CD4-positive, alpha-beta memory T cell (primary cell): ENCODE measurements at regions of chr2 and their contacts with region 1.

Region 1: DNA sequence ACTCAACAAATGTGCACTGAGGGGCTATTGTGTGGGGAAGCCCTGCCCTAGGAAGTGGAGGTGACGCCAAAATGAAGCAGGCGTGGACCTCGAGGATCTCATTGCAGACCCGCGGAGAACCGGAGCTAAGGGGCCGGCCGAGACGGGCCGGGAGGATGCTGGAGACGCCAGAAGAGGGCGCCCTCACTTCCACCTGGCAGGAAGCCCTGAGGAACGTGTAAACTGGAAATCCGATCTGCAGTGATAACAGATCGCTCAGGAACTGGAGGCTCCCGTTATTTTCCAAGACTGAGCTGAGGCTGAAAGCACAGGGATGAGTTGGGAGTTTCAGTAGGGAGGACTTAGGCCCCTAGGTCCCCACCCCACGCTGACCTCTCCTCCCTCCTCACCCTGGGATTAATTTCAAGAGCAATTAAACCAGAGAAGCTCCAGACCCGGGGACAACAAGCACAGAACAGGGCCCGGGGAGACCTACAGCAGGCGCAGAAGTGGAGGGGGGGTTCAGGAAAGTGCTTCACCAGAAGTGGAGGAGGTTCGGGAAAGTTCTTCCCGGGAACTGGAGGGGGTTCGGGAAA is 7.7 kb upstream of the COL6A3 start:
- DNase-seq: peak; percentile 57 to 75 (median 70)
- H3K4me3 ChIP-seq: peak overlapping the region in 1 of 2 donors; percentile 36
- H3K4me3 Mint-ChIP-seq: peak overlapping the region in 7 of 8 donors; percentile 26 to 78 (median 64)
- H3K27ac ChIP-seq: no peak overlapping the region
- H3K27ac Mint-ChIP-seq: peak overlapping the region in 5 of 7 donors; percentile 50 to 79 (median 61)
- H3K4me1 ChIP-seq: peaks cover 12% of the 10 kb centered on the region
- H3K4me1 Mint-ChIP-seq: peaks cover 12 to 21% (median 15%) of the 10 kb centered on the region in 4 donors
- H3K27me3 ChIP-seq: no peaks in the 10 kb centered on the region
- H3K27me3 Mint-ChIP-seq: no peaks in the 10 kb centered on the region

Region 2: GRCh38 chr2:237235383-237236095 is 186.1 kb before region 1 on chr2:
- CTCF ChIA-PET with region 1: no interaction called
- POLR2A ChIA-PET with region 1: no interaction called
- intact Hi-C with region 1: no loop called
- DNase-seq: no peak
- H3K4me3 ChIP-seq: no peak overlapping the region
- H3K4me3 Mint-ChIP-seq: no peak overlapping the region
- H3K27ac ChIP-seq: no peak overlapping the region
- H3K27ac Mint-ChIP-seq: no peak overlapping the region
- H3K4me1 ChIP-seq: no peaks in the 10 kb centered on the region
- H3K4me1 Mint-ChIP-seq: no peaks in the 10 kb centered on the region
- H3K27me3 ChIP-seq: no peaks in the 10 kb centered on the region
- H3K27me3 Mint-ChIP-seq: peaks cover 14 to 15% of the 10 kb centered on the region in 2 donors

Region 3: GRCh38 chr2:237434866-237435311 is 13.3 kb after region 1 on chr2:
- CTCF ChIA-PET with region 1: interaction called, 93 read pairs
- POLR2A ChIA-PET with region 1: interaction called, 59 read pairs
- intact Hi-C with region 1: loop called (anchors 2 kb)
- DNase-seq: peak; percentile 60 to 80 (median 68)
- H3K4me3 ChIP-seq: peak overlapping the region; percentile 27 to 51
- H3K4me3 Mint-ChIP-seq: peak overlapping the region; percentile 67 to 94 (median 80)
- H3K27ac ChIP-seq: peak overlapping the region; percentile 52
- H3K27ac Mint-ChIP-seq: peak overlapping the region; percentile 73 to 94 (median 84)
- H3K4me1 ChIP-seq: peaks cover 85% of the 10 kb centered on the region
- H3K4me1 Mint-ChIP-seq: peaks cover 58 to 84% (median 71%) of the 10 kb centered on the region in 4 donors
- H3K27me3 ChIP-seq: no peaks in the 10 kb centered on the region
- H3K27me3 Mint-ChIP-seq: no peaks in the 10 kb centered on the region

Region 4: DNA sequence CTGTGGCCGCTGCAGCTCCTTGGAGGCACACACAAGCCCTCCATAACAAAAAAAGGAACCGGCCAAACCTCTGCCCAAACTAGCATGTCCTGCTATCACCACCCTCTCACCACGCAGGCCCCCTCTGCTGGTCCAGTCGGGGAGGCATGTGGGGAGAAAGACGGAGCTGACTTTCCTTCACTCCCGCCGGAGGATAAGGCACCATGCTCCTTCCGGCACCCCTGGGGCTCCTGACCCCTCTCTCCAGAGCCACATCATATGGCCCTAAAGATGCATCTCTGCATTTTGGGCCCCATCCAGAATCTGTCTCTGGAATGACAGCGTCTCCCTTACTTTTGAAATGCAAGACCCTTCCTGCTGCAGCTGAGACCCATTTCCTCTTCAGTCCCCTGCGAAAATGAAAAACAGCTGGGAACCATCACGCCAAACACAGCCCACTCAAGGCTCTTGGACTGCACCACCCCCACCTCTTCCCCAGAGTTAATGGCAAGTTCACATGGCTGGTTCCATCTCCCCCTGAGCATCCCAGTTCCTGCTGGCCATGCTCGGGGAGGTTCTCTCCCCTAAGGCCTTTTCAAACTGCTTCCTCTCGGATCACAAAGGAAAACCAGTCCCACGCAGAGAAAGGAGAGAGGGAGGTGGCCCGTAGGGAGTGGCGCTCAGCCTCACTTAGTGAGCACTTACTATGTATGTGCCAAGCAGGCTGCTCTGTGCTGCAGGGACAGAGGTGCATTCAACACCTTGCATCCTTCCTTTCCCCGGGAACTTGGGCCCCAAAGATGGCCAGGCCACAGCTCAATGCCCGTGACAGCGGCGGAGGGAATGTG is 30.2 kb after region 1 on chr2:
- CTCF ChIA-PET with region 1: interaction called, 18 read pairs
- POLR2A ChIA-PET with region 1: no interaction called
- intact Hi-C with region 1: no loop called
- DNase-seq: no peak
- H3K4me3 ChIP-seq: no peak overlapping the region
- H3K4me3 Mint-ChIP-seq: no peak overlapping the region
- H3K27ac ChIP-seq: no peak overlapping the region
- H3K27ac Mint-ChIP-seq: no peak overlapping the region
- H3K4me1 ChIP-seq: no peaks in the 10 kb centered on the region
- H3K4me1 Mint-ChIP-seq: peaks cover 0 to 9% (median 4%) of the 10 kb centered on the region in 4 donors
- H3K27me3 ChIP-seq: no peaks in the 10 kb centered on the region
- H3K27me3 Mint-ChIP-seq: no peaks in the 10 kb centered on the region

Region 5: DNA sequence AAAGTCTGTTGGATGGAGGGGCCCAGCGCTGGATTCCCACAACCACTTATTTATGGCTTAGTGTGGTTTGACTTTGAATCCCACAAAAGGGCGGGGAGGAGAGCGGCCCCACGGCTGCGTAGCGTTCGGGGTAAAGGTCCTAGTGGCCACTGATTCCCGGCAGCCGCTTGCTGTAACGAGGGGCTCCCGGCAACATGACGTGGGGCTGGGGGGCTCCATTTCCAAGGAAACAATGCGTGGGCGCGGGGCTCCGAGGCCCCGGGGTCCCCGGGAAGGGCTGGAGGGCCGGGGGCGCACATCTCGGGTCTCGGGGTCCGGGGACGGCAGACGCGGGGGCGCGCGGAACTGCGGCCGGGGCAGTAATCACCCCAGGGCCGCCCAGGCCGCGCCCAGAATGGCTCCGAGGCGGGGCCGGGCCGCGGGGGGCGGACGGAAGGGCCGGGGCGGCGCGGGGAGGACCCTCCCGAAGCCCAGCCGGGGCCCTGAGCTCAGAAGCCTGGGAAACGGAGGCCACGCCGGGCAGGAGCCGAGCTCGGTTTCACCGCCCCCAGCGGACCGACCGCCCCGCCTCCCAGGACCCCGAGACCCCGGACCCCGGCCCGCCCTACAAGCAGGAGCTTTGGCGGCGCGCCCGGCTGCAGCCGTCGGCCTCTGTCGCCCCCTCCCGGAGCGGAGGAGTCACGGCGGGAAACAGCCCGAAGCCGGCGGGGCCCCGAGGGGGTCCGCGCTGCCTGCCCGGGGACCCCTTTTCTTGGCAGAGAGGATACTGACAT is 53.5 kb after region 1 on chr2:
- CTCF ChIA-PET with region 1: interaction called, 381 read pairs
- POLR2A ChIA-PET with region 1: interaction called, 71 read pairs
- intact Hi-C with region 1: loop called (anchors 1 kb)
- DNase-seq: peak; percentile 63 to 75 (median 69)
- H3K4me3 ChIP-seq: peak overlapping the region in 1 of 2 donors; percentile 64
- H3K4me3 Mint-ChIP-seq: peak overlapping the region; percentile 84 to 88 (median 87)
- H3K27ac ChIP-seq: peak overlapping the region; percentile 37
- H3K27ac Mint-ChIP-seq: peak overlapping the region in 6 of 7 donors; percentile 40 to 85 (median 76)
- H3K4me1 ChIP-seq: peaks cover 12% of the 10 kb centered on the region
- H3K4me1 Mint-ChIP-seq: peaks cover 0 to 13% (median 4%) of the 10 kb centered on the region in 4 donors
- H3K27me3 ChIP-seq: peaks cover 8% of the 10 kb centered on the region
- H3K27me3 Mint-ChIP-seq: peaks cover 3 to 23% of the 10 kb centered on the region in 2 donors

Region 6: DNA sequence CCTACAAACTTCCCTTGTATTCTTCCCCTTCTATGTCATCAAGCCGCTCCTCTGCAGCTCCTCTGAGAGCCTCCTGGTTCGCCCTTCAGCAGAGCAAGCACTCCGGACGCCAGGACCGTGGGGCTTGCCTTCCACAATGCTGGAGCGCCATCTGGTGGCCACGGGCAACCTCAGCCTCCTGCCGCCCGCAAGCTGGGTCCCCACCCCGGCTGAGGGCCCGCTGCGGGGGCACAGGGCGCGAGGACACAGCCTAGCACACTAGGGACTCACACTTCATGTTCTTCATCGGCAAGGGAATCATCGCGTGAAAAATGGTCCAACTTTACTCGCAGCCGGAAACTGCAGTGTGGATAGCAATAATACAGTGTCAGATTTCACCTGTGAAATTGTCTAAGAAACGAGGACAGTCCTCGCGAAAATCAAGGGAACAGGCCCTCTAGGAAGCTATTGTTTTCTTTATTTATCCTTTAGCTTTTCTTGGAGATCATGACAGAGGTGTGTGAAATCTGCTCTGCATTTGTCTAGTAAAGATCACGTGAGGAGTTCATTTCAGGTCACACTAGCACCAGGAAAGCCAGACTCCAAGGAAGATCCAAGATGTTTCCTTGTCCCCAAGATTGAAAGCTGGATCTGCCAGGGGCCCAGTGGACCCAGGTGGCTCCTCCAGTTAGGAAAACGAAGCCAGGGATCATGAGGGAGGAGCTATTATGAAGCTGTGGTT is 150.6 kb after region 1 on chr2:
- CTCF ChIA-PET with region 1: interaction called, 27 read pairs
- POLR2A ChIA-PET with region 1: no interaction called
- intact Hi-C with region 1: no loop called
- DNase-seq: peak; percentile 73 to 80 (median 77)
- H3K4me3 ChIP-seq: no peak overlapping the region
- H3K4me3 Mint-ChIP-seq: no peak overlapping the region
- H3K27ac ChIP-seq: no peak overlapping the region
- H3K27ac Mint-ChIP-seq: peak overlapping the region in 1 of 7 donors; percentile 53
- H3K4me1 ChIP-seq: no peaks in the 10 kb centered on the region
- H3K4me1 Mint-ChIP-seq: peaks cover 0 to 6% (median 3%) of the 10 kb centered on the region in 4 donors
- H3K27me3 ChIP-seq: no peaks in the 10 kb centered on the region
- H3K27me3 Mint-ChIP-seq: peaks cover 4 to 6% of the 10 kb centered on the region in 2 donors